ENCODE measurements at regions of chr2 and their contacts with region 1.

Region 1: DNA sequence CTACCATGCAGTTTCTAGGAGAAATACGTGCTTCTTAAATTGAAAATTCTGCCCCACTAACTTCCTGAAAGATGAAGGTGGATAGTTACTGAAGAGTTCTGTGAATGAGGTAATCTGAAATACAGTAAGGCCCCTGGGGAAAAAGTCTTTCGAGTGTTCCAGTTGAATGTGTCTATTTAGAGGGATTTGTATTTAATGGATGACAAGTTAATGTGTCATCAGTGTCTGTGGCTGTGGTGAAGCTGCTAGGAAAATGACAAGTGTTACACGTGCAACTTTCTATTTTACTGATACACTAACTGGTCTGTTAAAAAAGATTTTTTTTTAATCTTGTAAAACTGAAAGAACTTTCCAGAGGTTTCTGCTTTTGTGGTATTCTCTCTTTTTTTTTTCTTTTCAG is 384.6 kb downstream of the STK39 start:
- DNase-seq: no peak
- H3K4me3 Mint-ChIP-seq: no peak overlapping the region
- H3K27ac Mint-ChIP-seq: no peak overlapping the region
- H3K4me1 Mint-ChIP-seq: no peaks in the 10 kb centered on the region
- H3K27me3 Mint-ChIP-seq: no peaks in the 10 kb centered on the region
- CTCF ChIP-seq: no peak

Region 2: DNA sequence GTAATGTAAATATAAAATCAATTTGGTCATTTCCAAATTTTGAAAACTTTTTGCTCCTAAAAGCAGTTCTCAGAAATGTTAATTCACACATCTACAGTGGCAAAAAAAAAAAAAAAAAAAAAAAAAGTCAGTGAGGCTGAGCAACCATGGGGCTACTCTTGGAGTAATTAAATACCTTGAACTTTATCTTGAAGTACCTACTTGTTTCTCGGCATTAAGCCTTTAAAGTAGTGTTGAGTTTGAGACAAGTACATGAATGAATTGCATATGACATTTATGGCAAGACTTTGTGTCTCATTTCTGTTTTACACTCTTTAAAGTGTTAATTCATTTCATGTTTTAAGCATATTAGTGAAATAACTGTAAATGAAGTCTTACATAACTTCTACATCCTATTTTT is 361.2 kb before region 1 on chr2:
- CTCF ChIA-PET with region 1: interaction called, 11 read pairs
- intact Hi-C with region 1: no loop called
- DNase-seq: no peak
- H3K4me3 Mint-ChIP-seq: no peak overlapping the region
- H3K27ac Mint-ChIP-seq: no peak overlapping the region
- H3K4me1 Mint-ChIP-seq: no peaks in the 10 kb centered on the region
- H3K27me3 Mint-ChIP-seq: no peaks in the 10 kb centered on the region
- CTCF ChIP-seq: no peak